Right ventricle myocardium superior (tissue), 1 donor: ENCODE measurements at regions of chr9 and their contacts with region 1.

Region 1: GRCh38 chr9:99130069-99130468 is 25.2 kb downstream of the TGFBR1 start:
- DNase-seq: no peak
- ATAC-seq: no peak

Region 2: DNA sequence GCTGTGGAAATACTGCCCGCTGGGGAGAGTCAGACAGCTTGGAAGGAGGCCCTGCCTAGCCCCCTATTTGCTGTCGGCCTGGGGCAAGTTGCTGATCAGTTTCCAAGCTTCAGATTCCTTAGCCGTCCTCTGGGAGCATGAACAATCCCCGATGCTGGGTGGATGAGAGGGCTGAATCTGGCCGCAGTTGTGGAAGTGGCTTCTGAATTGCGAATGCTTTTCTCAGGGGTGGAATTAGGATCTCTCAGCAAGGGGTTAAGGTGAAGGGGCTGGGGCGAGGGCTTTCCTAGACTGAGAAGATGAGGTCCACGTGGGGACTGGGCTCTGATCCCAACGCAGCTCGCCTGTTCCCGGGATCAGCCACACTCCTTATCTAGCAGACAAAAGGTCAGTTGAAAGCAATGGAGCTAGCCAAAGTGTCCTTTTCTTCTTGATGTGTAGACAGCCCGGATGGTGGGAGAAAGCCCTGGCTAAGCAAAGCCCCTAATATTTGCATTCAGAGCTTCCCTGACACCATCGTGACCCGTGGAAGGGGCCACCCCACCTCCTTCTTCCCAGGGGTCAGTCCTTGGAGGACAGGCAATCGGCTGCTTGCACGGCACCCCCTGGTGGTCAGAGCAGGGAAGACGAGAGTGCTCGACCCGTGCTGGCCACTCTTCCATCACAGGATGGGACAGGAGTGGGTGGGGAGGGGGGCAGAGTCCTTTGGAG is 131.5 kb before region 1 on chr9:
- intact Hi-C with region 1: loop called (anchors 10 kb)
- DNase-seq: peak; percentile 91
- ATAC-seq: peak; percentile 85